ENCODE measurements at regions of chr1 and their contacts with region 1.

Region 1: GRCh38 chr1:70221241-70222121 is at the start of gene SRSF11:
- DNase-seq: peak; percentile 94
- H3K4me3 ChIP-seq: peak within 1 kb of the TSS; percentile 78 to 80
- H3K27ac ChIP-seq: peak within 1 kb of the TSS; percentile 93 to 94
- H3K4me1 ChIP-seq: peaks cover 0 to 18% of the 10 kb centered on the region in 2 experiments; a peak in 3 of 4 replicates
- H3K27me3 ChIP-seq: no peaks in the 10 kb centered on the region
- CTCF ChIP-seq: 0 out of 2 replicates have a peak, but pooled peaks have one; percentile 20
- EP300 ChIP-seq: peak in 1 of 2 experiments; percentile 58; a peak in 1 of 4 replicates
- RAD21 ChIP-seq: no peak
- polyA plus RNA-seq, gene SRSF11: 138 and 170 TPM in 2 replicates

Region 2: DNA sequence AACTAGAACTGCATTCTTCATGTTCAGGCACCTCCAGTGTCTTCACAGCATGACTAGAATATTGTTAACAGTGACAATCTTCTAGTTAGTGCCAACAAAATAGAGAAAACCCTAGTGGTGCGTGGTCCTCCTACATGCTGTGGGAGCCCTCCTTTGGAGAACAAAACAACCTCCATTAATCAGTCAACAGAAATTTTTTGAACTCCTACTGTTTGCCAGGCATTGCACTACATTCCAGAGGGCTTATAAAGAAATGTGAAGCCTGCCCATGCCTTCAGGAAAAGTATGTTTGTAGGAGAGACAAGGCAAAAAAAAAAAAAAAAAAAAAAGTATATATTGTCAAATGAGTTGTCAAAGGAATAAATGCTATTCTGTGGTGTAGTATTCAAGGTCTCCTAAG is 268.8 kb before region 1 on chr1:
- CTCF ChIA-PET with region 1: no interaction called
- POLR2A ChIA-PET with region 1: no interaction called
- DNase-seq: no peak
- H3K4me3 ChIP-seq: no peak overlapping the region
- H3K27ac ChIP-seq: no peak overlapping the region
- H3K4me1 ChIP-seq: no peaks in the 10 kb centered on the region
- H3K27me3 ChIP-seq: no peaks in the 10 kb centered on the region
- CTCF ChIP-seq: no peak
- EP300 ChIP-seq: no peak
- RAD21 ChIP-seq: no peak

Region 3: DNA sequence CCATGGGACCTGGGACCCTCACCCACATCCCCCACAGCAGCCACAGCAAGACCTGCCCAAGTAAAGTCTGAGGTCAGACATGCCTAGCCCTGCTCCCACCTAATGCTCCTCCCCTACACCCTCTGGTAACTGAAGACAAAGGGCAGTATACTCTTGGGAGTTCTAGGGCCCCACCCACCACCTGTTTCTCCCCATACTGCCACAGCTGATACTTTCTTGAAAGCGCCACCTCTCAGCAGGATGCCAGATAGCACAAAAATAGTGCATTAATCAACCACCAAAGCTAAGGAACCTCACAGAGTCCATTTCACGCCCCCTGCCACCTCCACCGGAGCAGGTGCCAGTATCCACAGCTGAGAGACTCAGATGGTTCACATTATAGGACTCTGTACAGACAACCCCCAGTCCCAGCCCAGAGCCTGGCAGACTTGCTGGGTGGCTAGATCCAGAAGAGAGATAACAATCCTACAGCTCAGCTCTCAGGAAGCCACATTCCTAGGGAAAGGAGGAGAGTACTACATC is 254.2 kb before region 1 on chr1:
- CTCF ChIA-PET with region 1: no interaction called
- POLR2A ChIA-PET with region 1: no interaction called
- DNase-seq: no peak
- H3K4me3 ChIP-seq: no peak overlapping the region
- H3K27ac ChIP-seq: no peak overlapping the region
- H3K4me1 ChIP-seq: peaks cover 4 to 6% of the 10 kb centered on the region in 2 experiments; a peak in 2 of 4 replicates
- H3K27me3 ChIP-seq: no peaks in the 10 kb centered on the region
- CTCF ChIP-seq: no peak
- EP300 ChIP-seq: no peak
- RAD21 ChIP-seq: no peak

Region 4: GRCh38 chr1:70205434-70206118 is 15.9 kb before region 1 on chr1 and contains the start of gene LRRC40:
- CTCF ChIA-PET with region 1: interaction called, 3 read pairs
- POLR2A ChIA-PET with region 1: interaction called, 16 read pairs
- DNase-seq: peak; percentile 91
- H3K4me3 ChIP-seq: peak within 1 kb of the TSS; percentile 74 to 91
- H3K27ac ChIP-seq: peak within 1 kb of the TSS; percentile 90 to 93
- H3K4me1 ChIP-seq: peaks cover 4% of the 10 kb centered on the region in 2 experiments; a peak in 3 of 4 replicates
- H3K27me3 ChIP-seq: no peaks in the 10 kb centered on the region
- CTCF ChIP-seq: 0 out of 2 replicates have a peak, but pooled peaks have one; percentile 9
- EP300 ChIP-seq: peak; percentile 12 to 30; a peak in 1 of 4 replicates
- RAD21 ChIP-seq: no peak
- polyA plus RNA-seq, gene LRRC40: 5.6 and 6.3 TPM in 2 replicates

Region 5: GRCh38 chr1:70354332-70355110 is 133.0 kb after region 1 on chr1 and contains the start of gene ANKRD13C:
- CTCF ChIA-PET with region 1: no interaction called
- POLR2A ChIA-PET with region 1: interaction called, 12 read pairs
- DNase-seq: peak; percentile 94
- H3K4me3 ChIP-seq: peak within 1 kb of the TSS; percentile 80 to 91
- H3K27ac ChIP-seq: peak within 1 kb of the TSS; percentile 94
- H3K4me1 ChIP-seq: peaks cover 3 to 7% of the 10 kb centered on the region in 2 experiments; a peak in 3 of 4 replicates
- H3K27me3 ChIP-seq: no peaks in the 10 kb centered on the region
- CTCF ChIP-seq: no peak; the same call in 1 of the 2 replicates
- EP300 ChIP-seq: no peak
- RAD21 ChIP-seq: no peak
- polyA plus RNA-seq, gene ANKRD13C: 5.2 and 5.5 TPM in 2 replicates

Region 6: GRCh38 chr1:70410604-70411359 is 189.3 kb after region 1 on chr1 and contains the start of gene CTH:
- CTCF ChIA-PET with region 1: interaction called, 3 read pairs
- POLR2A ChIA-PET with region 1: interaction called, 15 read pairs
- DNase-seq: peak; percentile 92
- H3K4me3 ChIP-seq: peak within 1 kb of the TSS; percentile 79 to 86
- H3K27ac ChIP-seq: peak within 1 kb of the TSS; percentile 88 to 91
- H3K4me1 ChIP-seq: no peaks in the 10 kb centered on the region; a peak in 2 of 4 replicates
- H3K27me3 ChIP-seq: no peaks in the 10 kb centered on the region
- CTCF ChIP-seq: no peak
- EP300 ChIP-seq: no peak
- RAD21 ChIP-seq: no peak; the same call in 1 of the 2 replicates
- polyA plus RNA-seq, gene CTH: 3.9 and 4.2 TPM in 2 replicates

Region 7: DNA sequence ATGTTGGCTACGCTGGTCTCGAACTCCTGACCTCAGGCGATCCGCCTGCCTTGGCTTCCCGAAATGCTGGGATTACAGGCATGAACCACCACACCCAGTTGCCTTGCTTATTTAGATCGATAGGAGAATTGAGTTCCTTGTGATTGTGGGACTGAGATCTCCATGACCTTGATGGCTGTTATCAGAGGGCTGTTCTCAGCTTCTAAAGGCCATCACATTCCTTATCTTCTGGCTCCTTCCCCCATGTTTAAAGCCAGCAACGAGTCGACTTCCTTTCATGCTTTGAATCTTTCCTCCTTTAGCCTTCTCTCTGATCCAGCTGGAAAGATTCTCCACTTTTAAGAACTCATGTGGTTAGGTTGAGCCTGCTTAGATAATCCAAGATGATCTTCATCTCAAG is 227.6 kb after region 1 on chr1:
- CTCF ChIA-PET with region 1: no interaction called
- POLR2A ChIA-PET with region 1: no interaction called
- DNase-seq: no peak
- H3K4me3 ChIP-seq: no peak overlapping the region
- H3K27ac ChIP-seq: no peak overlapping the region
- H3K4me1 ChIP-seq: no peaks in the 10 kb centered on the region
- H3K27me3 ChIP-seq: no peaks in the 10 kb centered on the region
- CTCF ChIP-seq: no peak
- EP300 ChIP-seq: no peak
- RAD21 ChIP-seq: no peak